Natural killer cell (primary cell): ENCODE measurements at regions of chr11 and their contacts with region 1.

Region 1: DNA sequence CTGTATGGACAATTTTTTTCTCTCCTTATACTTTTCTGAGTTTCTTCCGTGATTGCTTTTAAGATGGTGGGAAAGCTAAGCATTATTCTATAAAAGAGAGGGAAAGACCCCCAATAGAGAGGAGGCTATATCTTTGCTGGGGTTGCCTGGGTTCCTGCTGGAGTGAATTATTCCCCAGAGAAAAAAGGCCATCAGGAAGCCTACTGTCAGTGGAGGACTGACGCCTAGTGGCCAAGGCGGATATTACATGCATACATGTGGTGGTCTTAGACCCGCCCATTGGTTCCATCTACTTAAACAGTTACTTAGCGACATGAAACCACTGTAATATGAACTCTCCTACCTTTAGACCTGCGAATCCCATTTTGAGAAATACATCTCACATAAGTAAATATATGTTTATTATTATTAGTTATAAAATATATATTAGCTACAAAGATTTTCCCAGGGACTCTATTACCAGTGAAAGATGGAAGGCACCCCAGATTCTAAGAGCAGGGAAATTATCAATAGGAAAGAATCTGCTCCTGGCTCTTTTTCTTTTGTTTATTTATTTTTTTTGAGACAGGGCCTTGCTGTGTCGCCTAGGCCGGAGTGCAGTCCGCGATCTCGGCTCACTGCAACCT is 15.7 kb upstream of the PGA3 start:
- DNase-seq: peak; percentile 70 to 92
- ATAC-seq: peak; percentile 83 to 99 (median 98)
- H3K4me3 ChIP-seq: no peak overlapping the region
- H3K4me3 Mint-ChIP-seq: no peak overlapping the region
- H3K27ac ChIP-seq: no peak overlapping the region
- H3K27ac Mint-ChIP-seq: no peak overlapping the region
- H3K4me1 ChIP-seq: no peaks in the 10 kb centered on the region
- H3K4me1 Mint-ChIP-seq: peaks cover 4 to 5% of the 10 kb centered on the region in 2 donors
- H3K27me3 ChIP-seq: no peaks in the 10 kb centered on the region
- H3K27me3 Mint-ChIP-seq: no peaks in the 10 kb centered on the region
- CTCF ChIP-seq: peak; percentile 98

Region 2: GRCh38 chr11:60831143-60831500 is 356.5 kb before region 1 on chr11:
- intact Hi-C with region 1: loop called (anchors 1 kb)
- DNase-seq: peak; percentile 74 to 91
- ATAC-seq: peak; percentile 82 to 95 (median 95)
- H3K4me3 ChIP-seq: no peak overlapping the region
- H3K4me3 Mint-ChIP-seq: no peak overlapping the region
- H3K27ac ChIP-seq: no peak overlapping the region
- H3K27ac Mint-ChIP-seq: peak overlapping the region in 1 of 2 donors; percentile 82
- H3K4me1 ChIP-seq: peaks cover 10% of the 10 kb centered on the region
- H3K4me1 Mint-ChIP-seq: peaks cover 0 to 5% of the 10 kb centered on the region in 2 donors
- H3K27me3 ChIP-seq: no peaks in the 10 kb centered on the region
- H3K27me3 Mint-ChIP-seq: peaks cover 0 to 15% of the 10 kb centered on the region in 2 donors
- CTCF ChIP-seq: peak; percentile 96

Region 3: GRCh38 chr11:60970369-60970774 is 217.2 kb before region 1 on chr11:
- intact Hi-C with region 1: loop called (anchors 2 kb)
- DNase-seq: peak; percentile 61 to 91
- ATAC-seq: peak; percentile 81 to 95 (median 82)
- H3K4me3 ChIP-seq: no peak overlapping the region
- H3K4me3 Mint-ChIP-seq: peak overlapping the region; percentile 79
- H3K27ac ChIP-seq: no peak overlapping the region
- H3K27ac Mint-ChIP-seq: no peak overlapping the region
- H3K4me1 ChIP-seq: peaks cover 42% of the 10 kb centered on the region
- H3K4me1 Mint-ChIP-seq: peaks cover 30 to 43% of the 10 kb centered on the region in 2 donors
- H3K27me3 ChIP-seq: no peaks in the 10 kb centered on the region
- H3K27me3 Mint-ChIP-seq: peaks cover 0 to 11% of the 10 kb centered on the region in 2 donors
- CTCF ChIP-seq: peak; percentile 86

Region 4: GRCh38 chr11:61129639-61130523 is 57.7 kb before region 1 on chr11:
- intact Hi-C with region 1: loop called (anchors 1 kb)
- DNase-seq: peak; percentile 81 to 95
- ATAC-seq: peak; percentile 95 to 100 (median 99)
- H3K4me3 ChIP-seq: no peak overlapping the region
- H3K4me3 Mint-ChIP-seq: no peak overlapping the region
- H3K27ac ChIP-seq: no peak overlapping the region
- H3K27ac Mint-ChIP-seq: peak overlapping the region in 1 of 2 donors; percentile 37
- H3K4me1 ChIP-seq: peaks cover 12% of the 10 kb centered on the region
- H3K4me1 Mint-ChIP-seq: peaks cover 6% of the 10 kb centered on the region in 2 donors
- H3K27me3 ChIP-seq: no peaks in the 10 kb centered on the region
- H3K27me3 Mint-ChIP-seq: peaks cover 0 to 7% of the 10 kb centered on the region in 2 donors
- CTCF ChIP-seq: peak; percentile 100